ENCODE measurements at regions of chr3 and their contacts with region 1.

Region 1: DNA sequence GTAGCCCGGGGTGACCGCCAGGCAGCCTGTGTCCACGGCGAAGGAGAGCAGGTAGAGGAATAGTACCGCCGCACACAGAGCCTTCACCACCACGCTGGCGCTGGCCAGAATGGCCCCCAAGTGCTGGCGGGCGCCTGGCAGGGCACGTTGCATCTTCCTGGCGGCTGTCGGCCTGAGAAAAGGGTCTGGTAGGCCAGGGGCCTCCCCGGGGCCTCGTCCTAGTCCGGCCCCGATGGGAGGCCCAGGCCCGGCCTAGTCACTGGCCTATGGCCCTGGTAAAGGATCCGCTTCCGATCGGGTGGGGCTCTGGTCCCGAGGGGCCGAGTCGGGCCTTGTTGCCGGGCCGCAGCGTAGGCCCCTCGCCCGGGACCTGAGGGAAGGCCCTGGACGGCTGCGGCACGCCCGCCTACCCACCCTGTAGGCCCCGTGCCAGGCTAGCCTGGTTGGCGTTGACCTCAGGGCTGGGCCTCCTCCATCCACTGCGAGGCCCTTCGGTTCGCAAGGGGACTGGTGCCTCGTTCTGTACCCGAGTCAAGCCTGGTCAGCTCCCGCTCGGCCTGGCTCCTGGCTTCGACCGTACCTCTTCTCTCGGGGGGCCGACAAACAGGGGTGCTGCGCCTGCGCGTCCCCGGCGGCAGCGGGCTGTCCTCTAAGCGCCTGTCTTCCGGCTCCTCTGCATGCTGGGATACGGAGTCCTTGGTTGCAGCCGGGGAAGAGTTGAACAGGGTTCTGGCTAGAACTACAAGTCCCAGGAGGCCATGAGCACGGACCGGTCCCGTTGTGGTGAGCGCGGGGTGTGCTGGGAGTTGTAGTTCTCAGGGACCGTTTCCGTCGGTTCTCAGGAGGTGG is at the start of gene TMEM115:
- DNase-seq: peak; percentile 98
- H3K4me3 ChIP-seq: peak within 1 kb of the TSS; percentile 62 to 97 (median 90)
- H3K27ac ChIP-seq: peak within 1 kb of the TSS; percentile 66
- H3K4me1 ChIP-seq: peaks cover 32% of the 10 kb centered on the region
- H3K27me3 ChIP-seq: no peaks in the 10 kb centered on the region
- CTCF ChIP-seq: no peak
- total RNA-seq, gene TMEM115: 37.6 to 42.8 TPM

Region 2: DNA sequence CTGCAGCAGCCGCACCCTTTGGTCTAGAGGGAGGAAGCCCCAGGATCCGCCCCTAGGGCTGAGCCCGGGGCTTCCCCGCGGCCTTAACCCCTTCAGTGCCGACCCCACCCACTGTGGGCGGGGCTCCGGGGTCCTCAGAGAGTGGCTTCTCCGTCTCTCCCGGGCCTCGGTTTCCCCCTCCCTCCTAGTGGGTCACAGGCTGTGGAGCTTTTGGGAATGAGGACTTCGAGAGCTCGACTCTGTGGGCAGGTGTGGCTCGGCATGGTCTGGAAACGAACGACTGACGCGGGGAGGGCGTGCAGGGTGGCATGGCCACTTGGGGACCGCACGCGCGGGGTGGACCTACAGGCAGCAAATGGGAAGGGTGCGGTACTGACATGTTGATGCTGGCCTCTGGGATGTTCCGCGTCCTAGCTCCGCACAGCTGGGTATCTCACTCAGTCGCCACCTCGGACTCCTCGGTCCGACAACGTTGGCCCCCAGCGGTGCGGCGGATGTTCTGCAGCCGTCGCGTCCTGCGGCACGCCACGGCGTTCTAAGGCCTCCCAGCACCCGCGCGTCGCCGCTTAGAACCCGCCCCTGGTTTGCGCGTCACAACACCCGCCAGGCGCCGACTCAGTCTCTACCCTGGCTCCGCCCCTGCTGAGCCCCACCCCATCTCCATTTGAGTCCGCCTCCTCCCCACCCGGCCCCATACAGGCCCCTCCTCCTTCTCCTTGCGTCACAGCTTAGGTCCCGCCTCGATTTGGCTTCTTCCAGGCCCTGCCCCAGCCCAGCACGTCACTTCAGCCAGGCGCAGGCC is 60.1 kb before region 1 on chr3 and contains the starts of genes HYAL3 and NAA80:
- CTCF ChIA-PET with region 1: no interaction called
- dilution Hi-C with region 1: no loop called
- in situ Hi-C with region 1: no loop called
- intact Hi-C with region 1: loop called (anchors 1 kb)
- DNase-seq: peak; percentile 100
- H3K4me3 ChIP-seq: peak within 1 kb of the TSS; percentile 94 to 99 (median 96)
- H3K27ac ChIP-seq: peak within 1 kb of the TSS; percentile 95
- H3K4me1 ChIP-seq: peaks cover 24% of the 10 kb centered on the region
- H3K27me3 ChIP-seq: no peaks in the 10 kb centered on the region
- CTCF ChIP-seq: peak; percentile 11 to 40
- total RNA-seq, gene HYAL3: 9.7 to 12.7 TPM
- total RNA-seq, gene NAA80: 8.3 to 20.9 TPM

Region 3: DNA sequence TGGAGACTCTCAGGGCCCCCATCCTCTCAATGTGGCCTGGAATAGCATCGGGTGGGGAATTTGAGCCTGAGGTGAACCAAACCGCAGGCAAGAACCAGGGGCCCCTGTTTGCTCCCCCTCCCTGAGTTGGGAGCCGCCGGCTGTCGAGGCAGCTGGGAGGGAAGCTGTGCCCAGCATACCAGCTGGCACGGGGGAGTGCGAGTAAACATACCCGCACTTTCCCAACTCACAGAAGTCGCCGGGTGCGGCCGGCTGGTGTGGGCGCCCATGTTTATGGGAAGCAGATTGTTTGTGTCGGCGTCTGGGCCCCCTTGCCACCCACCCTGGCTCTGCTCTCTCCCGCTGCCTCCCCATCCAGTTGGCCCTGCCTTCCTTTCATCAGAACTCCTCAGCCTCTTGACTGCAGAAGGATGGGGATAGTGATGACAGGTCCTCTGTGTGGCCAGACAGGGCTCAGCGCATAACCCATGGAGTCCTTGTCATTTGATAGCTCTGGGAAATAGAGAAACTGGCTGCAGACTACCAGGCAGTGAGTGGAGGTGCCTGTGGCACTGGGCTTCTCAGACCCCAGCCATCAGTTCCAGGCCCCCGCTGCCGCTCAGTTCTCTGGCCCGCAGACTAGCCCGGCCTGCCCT is 83.9 kb after region 1 on chr3:
- CTCF ChIA-PET with region 1: no interaction called
- dilution Hi-C with region 1: loop called (anchors 10 kb)
- in situ Hi-C with region 1: no loop called
- intact Hi-C with region 1: no loop called
- DNase-seq: no peak
- H3K4me3 ChIP-seq: no peak overlapping the region
- H3K27ac ChIP-seq: no peak overlapping the region
- H3K4me1 ChIP-seq: no peaks in the 10 kb centered on the region
- H3K27me3 ChIP-seq: no peaks in the 10 kb centered on the region
- CTCF ChIP-seq: no peak